A549 (cell line): ENCODE measurements at regions of chr5 and their contacts with region 1.

Region 1: GRCh38 chr5:138503487-138504270 is 38.4 kb downstream of the EGR1 start:
- DNase-seq: peak; percentile 67 to 86
- ATAC-seq: peak; percentile 71 to 82
- H3K4me3 ChIP-seq: no peak overlapping the region
- H3K27ac ChIP-seq: no peak overlapping the region
- H3K4me1 ChIP-seq: peaks cover 29% of the 10 kb centered on the region; the same call in 2 of the 3 replicates
- CTCF ChIP-seq: peak; percentile 84
- EP300 ChIP-seq: no peak
- POLR2A ChIP-seq: no peak
- RAD21 ChIP-seq: peak; percentile 73 to 76

Region 2: DNA sequence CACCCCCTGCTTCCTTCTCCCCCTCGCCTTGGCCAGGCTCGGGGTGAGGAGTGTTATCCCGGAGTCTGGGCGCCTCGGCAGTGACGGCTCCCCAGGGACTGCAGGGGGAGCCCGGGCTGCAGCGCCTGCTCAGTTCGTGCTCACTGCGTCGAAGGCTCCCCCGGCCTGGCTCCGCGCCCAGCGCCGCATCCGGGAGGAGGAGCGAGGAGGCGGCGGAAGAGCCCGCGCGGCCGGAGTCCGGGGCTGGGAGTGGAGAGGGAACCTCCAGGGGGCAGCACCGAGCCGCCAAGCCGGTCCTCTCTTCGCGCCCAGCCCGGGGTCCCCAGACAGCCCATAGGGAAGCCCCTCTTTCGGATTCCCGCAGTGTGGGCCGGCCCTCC is 39.7 kb before region 1 on chr5:
- CTCF ChIA-PET with region 1: interaction called, 199 read pairs
- POLR2A ChIA-PET with region 1: interaction called, 34 read pairs
- DNase-seq: peak; percentile 94 to 95
- ATAC-seq: peak; percentile 44 to 67
- H3K4me3 ChIP-seq: peak overlapping the region; percentile 66
- H3K27ac ChIP-seq: peak overlapping the region; percentile 95 to 96
- H3K4me1 ChIP-seq: peaks cover 12% of the 10 kb centered on the region
- CTCF ChIP-seq: peak; percentile 90
- EP300 ChIP-seq: no peak
- POLR2A ChIP-seq: peak; percentile 64
- RAD21 ChIP-seq: peak; percentile 31 to 71

Region 3: GRCh38 chr5:138482638-138483037 is 21.0 kb before region 1 on chr5:
- CTCF ChIA-PET with region 1: interaction called, 27 read pairs
- POLR2A ChIA-PET with region 1: no interaction called
- DNase-seq: no peak
- ATAC-seq: peak; percentile 54 to 68
- H3K4me3 ChIP-seq: no peak overlapping the region
- H3K27ac ChIP-seq: no peak overlapping the region
- H3K4me1 ChIP-seq: no peaks in the 10 kb centered on the region
- CTCF ChIP-seq: no peak
- EP300 ChIP-seq: no peak
- POLR2A ChIP-seq: no peak
- RAD21 ChIP-seq: no peak

Region 4: DNA sequence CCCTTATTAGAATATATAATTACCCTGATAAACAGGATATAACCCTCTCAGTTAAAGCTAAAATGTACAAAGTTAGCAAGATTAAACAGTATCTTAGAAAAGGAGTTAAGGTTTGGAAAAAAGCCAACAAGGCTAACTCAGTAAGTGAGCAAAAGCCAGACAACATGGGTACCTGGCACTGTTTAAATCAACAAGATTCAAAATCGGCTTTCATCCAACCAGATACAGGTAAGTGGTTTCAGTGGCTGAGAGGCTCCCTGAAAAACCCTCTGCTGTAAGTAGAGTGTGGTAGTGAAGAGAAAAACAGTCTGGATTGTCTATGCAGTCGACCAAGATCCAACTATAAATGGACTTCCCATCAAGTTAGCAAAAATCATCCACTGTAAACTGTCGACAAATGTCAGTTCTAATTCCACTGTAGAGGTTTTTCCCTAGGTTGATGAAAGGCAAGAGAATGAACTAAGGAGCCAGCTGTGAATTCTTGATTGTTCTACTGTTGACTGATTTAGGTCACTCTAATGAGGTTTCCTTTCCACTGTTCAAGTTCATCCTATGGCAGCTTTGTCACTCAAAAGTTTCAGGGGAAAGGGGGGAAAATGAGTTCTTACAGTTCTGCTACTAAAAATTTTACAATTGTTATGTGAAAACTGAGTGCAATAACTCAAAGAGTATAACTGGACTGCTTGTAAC is 12.0 kb after region 1 on chr5:
- CTCF ChIA-PET with region 1: interaction called, 53 read pairs
- POLR2A ChIA-PET with region 1: no interaction called
- DNase-seq: no peak
- ATAC-seq: no peak
- H3K4me3 ChIP-seq: no peak overlapping the region
- H3K27ac ChIP-seq: no peak overlapping the region
- H3K4me1 ChIP-seq: peaks cover 4% of the 10 kb centered on the region; the same call in 2 of the 3 replicates
- CTCF ChIP-seq: no peak
- EP300 ChIP-seq: no peak
- POLR2A ChIP-seq: no peak
- RAD21 ChIP-seq: no peak

Region 5: GRCh38 chr5:138536665-138537315 is 33.1 kb after region 1 on chr5:
- CTCF ChIA-PET with region 1: interaction called, 21 read pairs
- POLR2A ChIA-PET with region 1: no interaction called
- DNase-seq: peak in 1 of 2 experiments; percentile 40
- ATAC-seq: peak; percentile 84 to 92
- H3K4me3 ChIP-seq: no peak overlapping the region
- H3K27ac ChIP-seq: no peak overlapping the region
- H3K4me1 ChIP-seq: peaks cover 33% of the 10 kb centered on the region
- CTCF ChIP-seq: peak; percentile 15; the same call in 2 of the 3 replicates
- EP300 ChIP-seq: no peak
- POLR2A ChIP-seq: no peak
- RAD21 ChIP-seq: no peak

Region 6: DNA sequence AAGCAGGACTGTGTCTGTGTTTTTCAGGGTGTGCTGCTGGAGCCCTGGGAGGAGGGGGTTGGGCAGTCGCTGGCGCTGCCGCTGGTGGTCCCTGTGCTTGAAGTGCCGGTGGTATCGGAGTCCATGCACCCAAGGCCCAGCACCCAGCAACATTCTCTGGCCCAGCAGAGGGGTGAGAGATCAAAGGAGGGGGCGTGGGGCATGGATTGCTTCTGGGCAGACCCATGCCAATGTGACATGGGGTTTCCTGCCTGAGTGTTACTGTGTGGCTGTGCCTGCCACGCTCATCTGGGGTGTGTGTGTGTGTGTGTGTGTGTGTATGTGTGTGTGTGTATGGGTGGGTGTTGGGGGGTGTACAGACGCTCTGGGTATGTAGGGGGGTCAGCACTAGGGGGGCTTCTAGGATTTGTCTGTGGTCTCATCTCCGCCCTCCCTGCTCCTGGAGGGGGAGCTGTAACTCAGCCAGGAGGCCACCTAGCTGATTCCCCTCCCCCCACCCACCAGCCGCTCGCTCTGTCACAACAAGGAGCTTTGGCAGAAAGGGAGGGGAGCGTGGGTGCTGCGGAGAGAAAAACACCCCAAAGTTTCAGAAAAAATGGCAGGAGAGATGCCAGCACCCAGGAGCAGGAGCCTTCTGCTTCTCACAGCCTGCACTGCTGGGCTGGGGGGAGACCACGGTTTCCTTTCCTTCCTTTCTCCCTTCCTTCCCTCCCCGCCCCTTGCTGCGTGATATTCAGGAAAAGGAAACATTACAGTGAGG is 107.4 kb after region 1 on chr5:
- CTCF ChIA-PET with region 1: no interaction called
- POLR2A ChIA-PET with region 1: no interaction called
- DNase-seq: no peak
- ATAC-seq: no peak
- H3K4me3 ChIP-seq: no peak overlapping the region
- H3K27ac ChIP-seq: no peak overlapping the region
- H3K4me1 ChIP-seq: 0 out of 3 replicates have a peak, but pooled peaks cover 3% of the 10 kb centered on the region
- CTCF ChIP-seq: no peak
- EP300 ChIP-seq: no peak
- POLR2A ChIP-seq: no peak
- RAD21 ChIP-seq: no peak

Region 7: DNA sequence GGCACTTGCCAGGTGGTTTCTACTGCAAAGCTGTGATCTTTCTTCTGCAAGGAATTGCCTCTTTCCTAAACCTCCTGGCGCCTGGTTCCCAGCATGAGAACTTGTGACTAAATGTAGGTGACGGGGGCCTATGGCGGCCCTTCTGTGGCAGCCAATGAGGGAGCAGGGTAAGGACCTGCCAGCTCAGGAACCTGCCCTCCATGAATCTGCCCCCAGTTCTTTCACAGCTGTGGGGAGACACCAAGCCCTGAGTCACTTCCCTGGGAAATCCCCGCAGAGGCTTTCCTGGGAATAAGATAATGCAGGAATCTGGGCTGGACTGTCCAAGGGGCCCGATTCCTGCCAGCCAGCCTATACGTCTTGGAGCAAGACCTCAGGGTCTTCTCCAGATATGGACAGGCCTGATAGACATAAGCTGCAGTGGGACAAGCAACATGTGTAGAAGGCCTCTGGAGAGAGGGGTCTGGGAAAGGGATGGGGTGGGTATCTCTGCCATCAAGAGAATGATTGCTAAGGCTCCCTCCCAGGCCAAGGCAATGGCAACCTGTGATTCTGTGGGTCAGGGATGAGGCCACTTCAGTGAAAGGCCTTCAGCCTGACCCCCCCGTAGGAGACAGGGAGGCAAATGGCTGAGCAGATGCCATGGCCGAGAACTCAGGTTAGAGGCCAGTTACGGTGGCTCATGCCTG is 193.0 kb after region 1 on chr5:
- CTCF ChIA-PET with region 1: no interaction called
- POLR2A ChIA-PET with region 1: no interaction called
- DNase-seq: no peak
- ATAC-seq: peak in 1 of 2 experiments; percentile 31; a peak in 1 of 6 replicates
- H3K4me3 ChIP-seq: no peak overlapping the region
- H3K27ac ChIP-seq: no peak overlapping the region
- H3K4me1 ChIP-seq: no peaks in the 10 kb centered on the region
- CTCF ChIP-seq: no peak
- EP300 ChIP-seq: no peak
- POLR2A ChIP-seq: no peak
- RAD21 ChIP-seq: no peak